Sigmoid colon (tissue), 7 donors: ENCODE measurements at regions of chr16 and their contacts with region 1.

Region 1: DNA sequence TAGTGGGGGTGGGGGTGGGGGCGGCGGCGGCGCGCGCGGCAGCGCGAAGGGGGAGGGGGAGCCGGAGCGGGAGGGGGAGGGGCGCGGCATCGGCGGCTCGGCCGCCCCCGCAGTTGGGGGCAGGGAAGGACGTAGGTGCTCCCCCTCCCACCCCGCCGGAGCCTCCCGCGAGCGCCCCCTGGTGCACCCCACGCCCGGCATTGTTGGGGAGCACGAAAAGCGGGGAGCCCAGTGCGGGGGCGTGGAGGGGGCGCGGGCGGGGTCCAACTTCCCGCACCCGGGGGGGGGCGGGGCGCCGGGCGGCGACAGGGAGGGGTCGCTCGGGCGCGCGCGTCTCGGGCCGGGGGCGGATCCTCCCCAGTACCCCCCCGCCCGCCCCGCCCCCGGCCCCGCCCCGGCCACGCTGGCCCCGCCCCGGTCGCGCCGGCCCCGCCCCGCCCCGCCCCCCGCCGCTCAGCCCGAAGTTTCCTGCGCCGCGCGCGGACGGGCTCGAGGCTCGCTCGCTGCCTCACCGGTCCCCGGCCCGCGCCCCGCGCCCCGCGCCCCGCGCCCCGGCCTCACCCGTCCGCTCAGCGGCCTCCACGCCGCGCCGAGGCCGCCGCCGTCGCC is at the start of gene CACNA1H:
- DNase-seq: no peak
- H3K4me3 ChIP-seq: peak within 1 kb of the TSS; percentile 51 to 87 (median 71)
- H3K27ac ChIP-seq: peak within 1 kb of the TSS; percentile 90 to 98 (median 96)
- H3K4me1 ChIP-seq: peaks cover 0 to 73% (median 65%) of the 10 kb centered on the region in 4 donors
- H3K27me3 ChIP-seq: peaks cover 8 to 21% (median 10%) of the 10 kb centered on the region in 3 donors
- CTCF ChIP-seq: peak in 1 of 4 experiments; percentile 60
- EP300 ChIP-seq: no peak
- POLR2A ChIP-seq: no peak
- total RNA-seq, gene CACNA1H: 37.0 to 181 (median 127) TPM

Region 2: GRCh38 chr16:1105888-1106620 is 46.7 kb before region 1 on chr16:
- intact Hi-C with region 1: loop called (anchors 2 kb)
- DNase-seq: peak; percentile 86
- H3K4me3 ChIP-seq: no peak overlapping the region
- H3K27ac ChIP-seq: no peak overlapping the region
- H3K4me1 ChIP-seq: peaks cover 0 to 23% (median 19%) of the 10 kb centered on the region in 4 donors
- H3K27me3 ChIP-seq: peaks cover 13 to 51% (median 26%) of the 10 kb centered on the region in 3 donors
- CTCF ChIP-seq: peak; percentile 58 to 92 (median 76)
- EP300 ChIP-seq: no peak
- POLR2A ChIP-seq: no peak

Region 3: GRCh38 chr16:1169285-1170075 is 16.7 kb after region 1 on chr16:
- intact Hi-C with region 1: loop called (anchors 2 kb)
- DNase-seq: peak; percentile 92
- H3K4me3 ChIP-seq: peak overlapping the region; percentile 7 to 54 (median 45)
- H3K27ac ChIP-seq: peak overlapping the region; percentile 88 to 98 (median 96)
- H3K4me1 ChIP-seq: peaks cover 0 to 100% (median 98%) of the 10 kb centered on the region in 4 donors
- H3K27me3 ChIP-seq: no peaks in the 10 kb centered on the region
- CTCF ChIP-seq: no peak
- EP300 ChIP-seq: peak in 2 of 4 donors; percentile 51 to 53
- POLR2A ChIP-seq: peak; percentile 69 to 80

Region 4: DNA sequence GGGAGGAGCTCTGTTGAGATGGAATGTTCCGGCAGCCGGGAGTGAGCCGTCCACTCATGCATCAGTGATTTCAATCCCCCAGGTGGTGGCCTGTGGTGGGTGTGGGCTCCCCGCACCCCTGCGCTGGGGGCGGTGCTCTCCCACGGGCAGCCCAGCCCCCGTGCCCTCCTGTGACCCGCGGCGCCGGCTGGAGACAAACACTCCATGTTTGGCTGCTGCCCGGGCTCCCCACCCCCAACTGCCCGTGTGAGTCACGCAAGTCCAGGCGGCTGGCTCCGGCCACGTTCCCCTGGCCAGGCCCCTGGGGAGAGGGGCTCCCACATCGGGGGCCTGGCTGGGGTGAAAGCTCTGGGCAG is 29.5 kb after region 1 on chr16:
- intact Hi-C with region 1: loop called (anchors 1 kb)
- DNase-seq: peak; percentile 94
- H3K4me3 ChIP-seq: peak overlapping the region in 3 of 4 donors; percentile 13 to 29 (median 27)
- H3K27ac ChIP-seq: peak overlapping the region; percentile 89 to 98 (median 96)
- H3K4me1 ChIP-seq: peaks cover 0 to 85% (median 80%) of the 10 kb centered on the region in 4 donors
- H3K27me3 ChIP-seq: no peaks in the 10 kb centered on the region
- CTCF ChIP-seq: no peak
- EP300 ChIP-seq: peak in 2 of 4 donors; percentile 60 to 68
- POLR2A ChIP-seq: peak in 1 of 2 donors; percentile 15

Region 5: GRCh38 chr16:1194665-1195392 is 42.1 kb after region 1 on chr16:
- intact Hi-C with region 1: loop called (anchors 2 kb)
- DNase-seq: no peak
- H3K4me3 ChIP-seq: no peak overlapping the region
- H3K27ac ChIP-seq: peak overlapping the region; percentile 79 to 90 (median 85)
- H3K4me1 ChIP-seq: peaks cover 0 to 51% (median 48%) of the 10 kb centered on the region in 4 donors
- H3K27me3 ChIP-seq: no peaks in the 10 kb centered on the region
- CTCF ChIP-seq: peak; percentile 75 to 92 (median 82)
- EP300 ChIP-seq: no peak
- POLR2A ChIP-seq: no peak